Activated T-helper 2 cell treated with anti-CD3 and anti-CD28 coated beads, Interferon-gamma antibody, Interleukin-2, Interleukin-4, amounts not matched to agents 10 μg/mL and 5 μg/mL and 100 μg/mL, durations not matched to agents 14 hours and 24 hours and 36 hours (primary cell): ENCODE measurements at regions of chr2 and their contacts with region 1.

Region 1: GRCh38 chr2:227132986-227133385 is 31.0 kb downstream of the COL4A4 start:
- DNase-seq: no peak
- H3K4me3 Mint-ChIP-seq: no peak overlapping the region
- H3K27ac Mint-ChIP-seq: no peak overlapping the region
- H3K4me1 Mint-ChIP-seq: no peaks in the 10 kb centered on the region
- H3K27me3 Mint-ChIP-seq: peaks cover 7% of the 10 kb centered on the region

Region 2: DNA sequence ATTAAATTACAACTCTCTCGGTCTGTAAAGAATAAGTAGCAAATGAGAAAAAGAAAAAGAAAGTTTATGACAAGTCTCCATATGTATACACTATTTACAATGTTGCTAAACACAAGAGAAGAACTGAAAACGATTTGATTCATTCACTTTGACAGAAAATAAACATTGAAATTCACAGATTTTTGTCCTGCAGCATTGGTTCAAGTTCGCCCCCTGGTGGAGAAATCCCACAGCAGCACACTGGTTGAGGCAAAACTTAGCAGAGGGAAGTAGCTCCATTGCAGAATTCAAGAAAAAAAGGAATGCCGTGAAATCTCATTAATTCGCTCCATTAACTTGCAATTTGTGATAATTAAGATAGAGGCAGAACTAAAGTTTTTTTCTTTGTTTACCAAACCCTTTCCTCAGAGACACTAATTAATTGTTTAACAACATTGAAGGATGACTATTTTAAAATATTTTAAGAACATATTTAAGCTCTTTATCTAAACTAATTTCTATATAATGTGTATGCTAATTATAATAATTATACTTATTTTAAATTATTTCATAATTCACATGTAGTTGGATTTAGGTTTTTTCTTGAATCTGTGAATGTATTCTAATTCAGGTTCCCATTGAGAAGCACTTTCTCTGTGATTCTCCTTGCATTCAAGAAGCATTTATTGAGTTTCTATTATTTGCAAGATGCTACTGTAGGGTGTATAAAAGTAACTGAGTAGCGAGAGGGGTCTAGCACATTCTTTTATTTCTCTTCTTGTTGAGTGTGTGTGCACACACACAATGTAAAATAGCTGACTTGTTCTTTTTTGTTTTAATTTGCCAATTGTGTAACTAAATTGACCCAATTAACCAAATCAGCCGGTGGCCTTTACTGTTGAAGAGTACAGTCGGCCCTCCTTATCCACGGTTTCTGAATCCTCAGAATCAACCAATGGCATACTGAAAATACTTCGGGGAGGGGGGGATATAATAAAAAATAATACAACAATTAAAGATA is 105.6 kb after region 1 on chr2:
- intact Hi-C with region 1: loop called (anchors 1 kb)
- DNase-seq: peak; percentile 14
- H3K4me3 Mint-ChIP-seq: no peak overlapping the region
- H3K27ac Mint-ChIP-seq: no peak overlapping the region
- H3K4me1 Mint-ChIP-seq: no peaks in the 10 kb centered on the region
- H3K27me3 Mint-ChIP-seq: peaks cover 6% of the 10 kb centered on the region